Activated B cell treated with CpG ODN at 0.5 μM for 24 hours (primary cell): ENCODE measurements at regions of chr2 and their contacts with region 1.

Region 1: GRCh38 chr2:74440378-74441169 is 1.2 kb downstream of the RTKN start:
- DNase-seq: peak; percentile 73
- ATAC-seq: peak; percentile 94
- H3K4me3 Mint-ChIP-seq: peak overlapping the region; percentile 79
- H3K27ac Mint-ChIP-seq: no peak overlapping the region
- H3K4me1 Mint-ChIP-seq: peaks cover 53% of the 10 kb centered on the region
- H3K27me3 Mint-ChIP-seq: peaks cover 18% of the 10 kb centered on the region
- CTCF ChIP-seq: no peak

Region 2: GRCh38 chr2:74421221-74421870 is 19.2 kb before region 1 on chr2 and contains the starts of genes C2orf81 and WDR54:
- CTCF ChIA-PET with region 1: interaction called, 6 read pairs
- POLR2A ChIA-PET with region 1: interaction called, 18 read pairs
- intact Hi-C with region 1: loop called (anchors 1 kb)
- DNase-seq: peak; percentile 97
- ATAC-seq: peak; percentile 88
- H3K4me3 Mint-ChIP-seq: peak within 1 kb of the TSS; percentile 99
- H3K27ac Mint-ChIP-seq: peak within 1 kb of the TSS; percentile 96
- H3K4me1 Mint-ChIP-seq: peaks cover 44% of the 10 kb centered on the region
- H3K27me3 Mint-ChIP-seq: no peaks in the 10 kb centered on the region
- CTCF ChIP-seq: no peak
- total RNA-seq, gene C2orf81: 3.9 and 5.5 TPM in 2 replicates
- total RNA-seq, gene WDR54: 32.3 and 33.5 TPM in 2 replicates

Region 3: GRCh38 chr2:74458132-74458925 is 17.8 kb after region 1 on chr2 and contains the start of gene WBP1:
- CTCF ChIA-PET with region 1: interaction called, 5 read pairs
- POLR2A ChIA-PET with region 1: interaction called, 24 read pairs
- intact Hi-C with region 1: loop called (anchors 1 kb)
- DNase-seq: peak; percentile 87
- ATAC-seq: peak; percentile 81
- H3K4me3 Mint-ChIP-seq: peak within 1 kb of the TSS; percentile 99
- H3K27ac Mint-ChIP-seq: peak within 1 kb of the TSS; percentile 100
- H3K4me1 Mint-ChIP-seq: peaks cover 62% of the 10 kb centered on the region
- H3K27me3 Mint-ChIP-seq: no peaks in the 10 kb centered on the region
- CTCF ChIP-seq: no peak
- total RNA-seq, gene WBP1: 61.4 and 65.3 TPM in 2 replicates

Region 4: DNA sequence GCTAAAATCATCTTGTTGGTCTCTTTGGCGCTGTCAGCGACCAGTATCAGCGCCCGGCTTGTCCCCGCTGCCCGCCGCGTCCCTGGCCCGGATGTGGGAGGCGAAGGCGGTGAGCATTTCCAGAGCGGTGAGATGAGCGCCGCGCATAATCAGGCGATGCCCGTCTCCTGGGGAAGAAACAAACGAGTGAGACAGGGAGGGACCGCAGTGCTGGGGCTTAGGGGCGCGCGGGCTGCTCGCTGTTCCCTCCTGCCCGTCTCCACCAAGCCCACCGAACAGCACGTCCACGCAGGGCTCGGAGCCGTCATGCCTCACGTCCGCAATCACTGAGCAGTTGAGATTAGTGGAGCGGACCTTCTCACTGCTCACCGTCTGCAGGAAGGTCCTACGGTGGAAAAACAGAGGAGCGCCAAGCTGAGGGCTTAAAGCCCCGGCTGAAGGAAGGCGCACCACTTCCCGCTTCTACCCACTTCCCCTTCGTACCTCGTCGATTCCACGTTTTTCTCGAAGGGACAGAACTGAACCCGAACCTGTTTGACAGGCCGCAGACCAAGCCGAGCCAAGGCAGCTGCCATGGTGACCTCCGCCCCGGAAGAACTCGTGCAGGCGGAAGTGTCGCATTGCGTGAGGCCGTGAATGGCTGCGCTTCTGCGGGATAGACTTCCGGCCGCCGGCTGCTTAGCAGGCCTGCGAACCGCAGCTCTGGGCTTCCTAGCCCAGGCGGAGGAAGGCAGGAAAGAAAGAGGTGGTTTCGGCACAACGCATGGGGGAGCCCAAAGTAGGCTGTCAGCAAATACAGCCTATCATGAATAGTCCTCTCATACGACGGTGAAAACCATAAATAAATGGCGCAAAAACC is 31.7 kb after region 1 on chr2 and contains the start of gene MRPL53:
- CTCF ChIA-PET with region 1: no interaction called
- POLR2A ChIA-PET with region 1: interaction called, 12 read pairs
- intact Hi-C with region 1: no loop called
- DNase-seq: peak; percentile 91
- ATAC-seq: peak; percentile 89
- H3K4me3 Mint-ChIP-seq: peak within 1 kb of the TSS; percentile 97
- H3K27ac Mint-ChIP-seq: peak within 1 kb of the TSS; percentile 97
- H3K4me1 Mint-ChIP-seq: peaks cover 23% of the 10 kb centered on the region
- H3K27me3 Mint-ChIP-seq: no peaks in the 10 kb centered on the region
- CTCF ChIP-seq: no peak
- total RNA-seq, gene MRPL53: 86.9 and 98.8 TPM in 2 replicates